CD4-positive, alpha-beta memory T cell (primary cell): ENCODE measurements at regions of chr7 and their contacts with region 1.

Region 1: GRCh38 chr7:27662490-27663205 is at the start of gene HIBADH:
- DNase-seq: peak; percentile 96 to 99 (median 98)
- H3K4me3 ChIP-seq: peak within 1 kb of the TSS; percentile 67 to 83
- H3K4me3 Mint-ChIP-seq: peak within 1 kb of the TSS; percentile 82 to 89 (median 87)
- H3K27ac ChIP-seq: peak within 1 kb of the TSS; percentile 69
- H3K27ac Mint-ChIP-seq: peak within 1 kb of the TSS; percentile 89 to 95 (median 93)
- H3K4me1 ChIP-seq: peaks cover 16% of the 10 kb centered on the region
- H3K4me1 Mint-ChIP-seq: peaks cover 10 to 30% (median 18%) of the 10 kb centered on the region in 4 donors
- H3K27me3 ChIP-seq: no peaks in the 10 kb centered on the region
- H3K27me3 Mint-ChIP-seq: peaks cover 0 to 2% of the 10 kb centered on the region in 2 donors
- total RNA-seq, gene HIBADH: 13.6 to 13.7 TPM

Region 2: GRCh38 chr7:26291699-26292538 is 1370.7 kb before region 1 on chr7 and contains the start of gene SNX10:
- CTCF ChIA-PET with region 1: no interaction called
- POLR2A ChIA-PET with region 1: no interaction called
- intact Hi-C with region 1: loop called (anchors 2 kb)
- DNase-seq: peak; percentile 61 to 74 (median 69)
- H3K4me3 ChIP-seq: peak within 1 kb of the TSS; percentile 43 to 61
- H3K4me3 Mint-ChIP-seq: peak within 1 kb of the TSS; percentile 90 to 97 (median 92)
- H3K27ac ChIP-seq: peak within 1 kb of the TSS; percentile 39
- H3K27ac Mint-ChIP-seq: peak within 1 kb of the TSS; percentile 79 to 93 (median 88)
- H3K4me1 ChIP-seq: peaks cover 32% of the 10 kb centered on the region
- H3K4me1 Mint-ChIP-seq: peaks cover 24 to 42% (median 34%) of the 10 kb centered on the region in 4 donors
- H3K27me3 ChIP-seq: no peaks in the 10 kb centered on the region
- H3K27me3 Mint-ChIP-seq: no peaks in the 10 kb centered on the region
- total RNA-seq, gene SNX10: 8.4 to 8.7 TPM

Region 3: GRCh38 chr7:27739909-27740448 is 77.3 kb after region 1 on chr7 and contains the start of gene TAX1BP1:
- CTCF ChIA-PET with region 1: interaction called, 9 read pairs
- POLR2A ChIA-PET with region 1: interaction called, 101 read pairs
- intact Hi-C with region 1: loop called (anchors 1 kb)
- DNase-seq: peak; percentile 93 to 96 (median 96)
- H3K4me3 ChIP-seq: peak within 1 kb of the TSS; percentile 100
- H3K4me3 Mint-ChIP-seq: peak within 1 kb of the TSS; percentile 94 to 99 (median 96)
- H3K27ac ChIP-seq: peak within 1 kb of the TSS; percentile 97
- H3K27ac Mint-ChIP-seq: peak within 1 kb of the TSS; percentile 96 to 100 (median 99)
- H3K4me1 ChIP-seq: peaks cover 33% of the 10 kb centered on the region
- H3K4me1 Mint-ChIP-seq: peaks cover 23 to 53% (median 37%) of the 10 kb centered on the region in 4 donors
- H3K27me3 ChIP-seq: no peaks in the 10 kb centered on the region
- H3K27me3 Mint-ChIP-seq: peaks cover 0 to 3% of the 10 kb centered on the region in 2 donors
- total RNA-seq, gene TAX1BP1: 109 to 111 TPM

Region 4: GRCh38 chr7:27745064-27745583 is 82.5 kb after region 1 on chr7:
- CTCF ChIA-PET with region 1: interaction called, 9 read pairs
- POLR2A ChIA-PET with region 1: interaction called, 101 read pairs
- intact Hi-C with region 1: loop called (anchors 1 kb)
- DNase-seq: peak in 1 of 5 donors; percentile 3
- H3K4me3 ChIP-seq: no peak overlapping the region
- H3K4me3 Mint-ChIP-seq: peak overlapping the region in 4 of 8 donors; percentile 8 to 59 (median 19)
- H3K27ac ChIP-seq: no peak overlapping the region
- H3K27ac Mint-ChIP-seq: peak overlapping the region in 1 of 7 donors; percentile 77
- H3K4me1 ChIP-seq: peaks cover 54% of the 10 kb centered on the region
- H3K4me1 Mint-ChIP-seq: peaks cover 36 to 73% (median 51%) of the 10 kb centered on the region in 4 donors
- H3K27me3 ChIP-seq: no peaks in the 10 kb centered on the region
- H3K27me3 Mint-ChIP-seq: no peaks in the 10 kb centered on the region

Region 5: DNA sequence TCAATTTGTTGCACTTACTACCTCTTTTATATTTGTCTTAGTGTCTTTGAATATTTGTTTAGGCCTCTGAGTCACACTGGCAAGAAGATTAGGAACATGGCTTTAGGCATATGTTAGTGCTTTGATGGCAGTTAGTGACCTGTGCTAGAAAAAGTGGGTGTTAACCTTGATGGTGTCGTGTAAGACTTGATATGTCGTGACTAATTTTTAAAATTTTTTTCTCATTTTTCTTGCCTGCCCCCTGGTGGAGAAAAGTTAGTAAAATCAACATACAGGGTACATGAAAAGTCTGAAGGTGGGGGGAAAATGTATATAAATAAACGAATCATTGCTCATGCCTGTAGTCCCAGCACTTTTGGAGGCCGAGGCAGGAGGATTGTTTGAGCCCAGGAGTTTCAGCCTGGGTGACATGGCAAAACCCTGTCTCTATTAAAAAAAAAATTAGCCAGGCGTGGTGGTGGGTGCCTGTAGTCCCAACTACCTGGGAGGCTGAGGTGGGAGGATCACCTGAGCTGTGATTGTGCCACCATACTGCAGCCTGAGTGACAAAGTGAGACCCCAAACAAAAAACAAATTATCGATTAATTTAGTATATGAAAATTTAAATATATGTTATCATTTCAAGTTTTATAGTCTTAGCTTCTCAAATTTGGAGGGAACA is 121.9 kb after region 1 on chr7:
- CTCF ChIA-PET with region 1: interaction called, 5 read pairs
- POLR2A ChIA-PET with region 1: interaction called, 3 read pairs
- intact Hi-C with region 1: loop called (anchors 1 kb)
- DNase-seq: peak; percentile 35 to 52 (median 45)
- H3K4me3 ChIP-seq: no peak overlapping the region
- H3K4me3 Mint-ChIP-seq: no peak overlapping the region
- H3K27ac ChIP-seq: no peak overlapping the region
- H3K27ac Mint-ChIP-seq: peak overlapping the region in 3 of 7 donors; percentile 47 to 77 (median 57)
- H3K4me1 ChIP-seq: no peaks in the 10 kb centered on the region
- H3K4me1 Mint-ChIP-seq: peaks cover 16 to 19% (median 16%) of the 10 kb centered on the region in 4 donors
- H3K27me3 ChIP-seq: no peaks in the 10 kb centered on the region
- H3K27me3 Mint-ChIP-seq: no peaks in the 10 kb centered on the region

Region 6: DNA sequence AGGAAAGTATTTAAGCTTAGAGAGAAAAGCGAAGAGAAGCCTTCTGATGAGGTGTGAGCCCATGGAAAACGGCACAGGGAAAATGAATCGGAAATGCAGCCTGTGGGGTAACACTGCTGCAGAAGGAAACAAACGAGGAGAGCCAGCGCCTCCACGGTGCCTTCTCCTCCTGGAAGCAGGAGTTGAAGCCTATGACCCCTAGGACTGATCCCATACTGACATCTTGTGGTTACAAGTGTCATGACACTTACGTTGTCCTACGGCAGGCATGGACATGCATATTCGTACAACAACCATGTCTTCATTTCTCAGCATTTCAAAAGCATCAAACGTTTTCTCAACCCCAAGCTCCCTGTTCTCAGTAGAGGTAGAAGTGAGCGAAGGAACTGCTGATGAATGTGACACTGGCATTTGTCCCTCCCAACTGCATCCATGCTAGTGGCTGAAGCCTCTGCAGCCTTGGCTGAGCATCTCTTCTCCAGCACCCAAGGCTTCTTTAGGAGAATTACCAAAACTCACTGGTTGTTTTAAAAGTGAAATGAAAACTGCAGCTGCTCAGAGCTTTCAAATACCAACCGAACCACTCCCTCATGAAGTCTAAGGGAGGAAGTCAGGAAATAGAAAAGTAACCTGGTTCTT is 357.8 kb after region 1 on chr7:
- CTCF ChIA-PET with region 1: no interaction called
- POLR2A ChIA-PET with region 1: no interaction called
- intact Hi-C with region 1: no loop called
- DNase-seq: peak in 4 of 5 donors; percentile 44 to 54 (median 50)
- H3K4me3 ChIP-seq: no peak overlapping the region
- H3K4me3 Mint-ChIP-seq: no peak overlapping the region
- H3K27ac ChIP-seq: no peak overlapping the region
- H3K27ac Mint-ChIP-seq: peak overlapping the region in 1 of 7 donors; percentile 12
- H3K4me1 ChIP-seq: peaks cover 9% of the 10 kb centered on the region
- H3K4me1 Mint-ChIP-seq: peaks cover 8 to 12% (median 8%) of the 10 kb centered on the region in 4 donors
- H3K27me3 ChIP-seq: no peaks in the 10 kb centered on the region
- H3K27me3 Mint-ChIP-seq: no peaks in the 10 kb centered on the region

Region 7: DNA sequence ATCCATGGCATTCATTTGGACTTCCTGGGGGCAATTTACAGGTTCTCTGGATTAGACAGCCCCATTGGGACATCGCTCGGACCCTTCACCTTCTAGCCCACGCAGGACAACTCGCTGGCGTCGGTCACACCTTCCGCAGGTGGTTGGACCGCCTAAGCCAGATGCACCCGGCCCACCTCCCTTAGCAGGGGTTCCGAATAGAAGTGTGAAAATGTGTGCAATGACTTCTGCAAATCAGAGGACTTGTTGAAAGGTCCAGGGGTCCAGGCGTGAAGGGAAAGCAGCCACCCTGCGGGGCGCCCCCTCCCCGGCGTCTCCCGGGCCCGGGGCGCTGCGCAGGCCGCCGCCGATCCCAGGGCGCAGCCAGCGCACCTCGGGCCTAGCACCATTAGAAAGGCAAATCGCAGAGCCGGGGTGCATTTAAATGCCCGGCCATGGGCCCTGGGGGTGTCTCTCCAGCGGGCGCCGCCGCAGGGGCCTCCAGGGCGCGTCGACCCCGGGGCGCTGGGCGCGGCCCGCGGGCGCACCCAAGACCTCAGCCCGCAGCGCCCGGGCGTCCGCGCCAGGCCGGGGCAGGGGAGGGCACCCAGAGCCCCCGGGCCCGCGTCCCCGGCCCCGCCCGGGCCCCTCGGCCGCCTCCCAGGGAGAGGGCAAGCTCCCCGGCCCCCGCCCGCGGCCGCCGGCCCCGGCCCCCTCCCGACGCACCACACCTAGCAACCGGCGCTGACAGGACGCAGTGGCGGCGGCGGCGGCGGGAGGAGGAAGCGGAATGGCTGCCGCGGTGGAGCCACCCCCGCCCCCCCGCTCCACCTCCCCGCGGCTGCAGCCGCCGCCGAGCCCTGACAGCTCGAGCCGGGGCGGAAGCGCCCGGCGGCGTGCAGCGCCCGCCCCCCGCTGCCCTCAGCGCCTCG is 516.7 kb after region 1 on chr7:
- CTCF ChIA-PET with region 1: no interaction called
- POLR2A ChIA-PET with region 1: interaction called, 3 read pairs
- intact Hi-C with region 1: loop called (anchors 1 kb)
- DNase-seq: peak; percentile 70 to 81 (median 75)
- H3K4me3 ChIP-seq: peak overlapping the region; percentile 21 to 56
- H3K4me3 Mint-ChIP-seq: peak overlapping the region; percentile 75 to 90 (median 85)
- H3K27ac ChIP-seq: peak overlapping the region; percentile 1
- H3K27ac Mint-ChIP-seq: peak overlapping the region; percentile 74 to 96 (median 92)
- H3K4me1 ChIP-seq: peaks cover 14% of the 10 kb centered on the region
- H3K4me1 Mint-ChIP-seq: peaks cover 19 to 28% (median 24%) of the 10 kb centered on the region in 4 donors
- H3K27me3 ChIP-seq: no peaks in the 10 kb centered on the region
- H3K27me3 Mint-ChIP-seq: peaks cover 0 to 1% of the 10 kb centered on the region in 2 donors